ENCODE measurements at regions of chr6 and their contacts with region 1.

Region 1: GRCh38 chr6:53544470-53545308 is at the start of gene GCLC:
- DNase-seq: peak; percentile 97
- H3K4me3 ChIP-seq: peak within 1 kb of the TSS; percentile 44 to 73 (median 63)
- H3K27ac ChIP-seq: peak within 1 kb of the TSS; percentile 53
- H3K4me1 ChIP-seq: peaks cover 24% of the 10 kb centered on the region
- H3K27me3 ChIP-seq: no peaks in the 10 kb centered on the region
- CTCF ChIP-seq: peak; percentile 39 to 65
- POLR2A ChIP-seq: peak; percentile 89
- total RNA-seq, gene GCLC: 17.3 and 22.8 TPM in 2 replicates

Region 2: GRCh38 chr6:53033764-53034163 is 510.9 kb before region 1 on chr6:
- CTCF ChIA-PET with region 1: no interaction called
- POLR2A ChIA-PET with region 1: no interaction called
- dilution Hi-C with region 1: no loop called
- intact Hi-C with region 1: no loop called
- DNase-seq: peak; percentile 61
- H3K4me3 ChIP-seq: no peak overlapping the region
- H3K27ac ChIP-seq: no peak overlapping the region
- H3K4me1 ChIP-seq: peaks cover 17% of the 10 kb centered on the region
- H3K27me3 ChIP-seq: no peaks in the 10 kb centered on the region
- CTCF ChIP-seq: no peak
- POLR2A ChIP-seq: no peak

Region 3: DNA sequence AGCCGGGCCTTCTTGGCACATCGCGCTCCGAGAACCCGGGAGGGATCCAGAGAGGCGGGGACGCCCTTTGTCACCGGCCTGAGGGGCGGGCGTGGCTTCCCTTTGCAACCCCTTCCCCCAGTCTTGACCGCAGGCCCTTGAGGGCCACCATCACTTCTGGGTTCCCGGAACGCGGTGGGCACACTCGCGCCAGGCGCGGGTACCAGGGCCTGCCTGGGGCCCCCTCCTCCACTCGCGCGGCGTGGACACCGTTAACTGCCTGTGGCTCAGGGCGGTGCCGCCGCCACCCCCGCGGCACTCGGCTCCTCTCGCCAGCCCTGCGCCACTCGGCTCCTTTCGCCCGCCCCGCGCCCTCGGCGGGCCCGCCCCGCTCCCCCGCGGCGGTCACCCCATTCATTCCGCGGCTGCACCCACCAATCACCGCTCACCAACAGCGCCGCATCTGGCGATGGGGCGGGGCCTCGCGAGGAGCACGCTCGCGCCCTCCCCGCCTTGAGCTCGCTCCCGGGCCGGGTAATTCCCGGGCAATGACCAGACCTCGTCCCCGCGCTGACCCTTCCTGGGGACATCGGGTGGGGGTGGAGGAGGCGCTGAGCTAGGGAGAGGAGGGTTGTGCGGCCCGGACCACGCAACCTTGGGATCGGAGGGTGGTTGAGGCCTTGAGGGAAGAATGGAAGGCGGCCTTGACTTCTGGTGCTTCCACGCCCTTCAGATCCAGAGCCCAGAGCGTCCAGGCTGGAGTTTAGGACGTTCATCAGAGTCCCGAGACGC is 185.4 kb before region 1 on chr6:
- CTCF ChIA-PET with region 1: no interaction called
- POLR2A ChIA-PET with region 1: no interaction called
- dilution Hi-C with region 1: no loop called
- intact Hi-C with region 1: loop called (anchors 1 kb)
- DNase-seq: peak; percentile 97
- H3K4me3 ChIP-seq: peak overlapping the region in 2 of 3 experiments; percentile 46 to 63
- H3K27ac ChIP-seq: peak overlapping the region; percentile 78
- H3K4me1 ChIP-seq: peaks cover 31% of the 10 kb centered on the region
- H3K27me3 ChIP-seq: peaks cover 0 to 3% of the 10 kb centered on the region in 2 experiments
- CTCF ChIP-seq: no peak
- POLR2A ChIP-seq: peak; percentile 46

Region 4: GRCh38 chr6:53651764-53652401 is 107.2 kb after region 1 on chr6:
- CTCF ChIA-PET with region 1: interaction called, 6 read pairs
- POLR2A ChIA-PET with region 1: no interaction called
- dilution Hi-C with region 1: no loop called
- intact Hi-C with region 1: loop called (anchors 1 kb)
- DNase-seq: peak; percentile 64
- H3K4me3 ChIP-seq: peak overlapping the region in 2 of 3 experiments; percentile 42 to 48
- H3K27ac ChIP-seq: no peak overlapping the region
- H3K4me1 ChIP-seq: peaks cover 5% of the 10 kb centered on the region
- H3K27me3 ChIP-seq: peaks cover 9 to 10% of the 10 kb centered on the region in 2 experiments
- CTCF ChIP-seq: peak in 1 of 2 donors; percentile 48
- POLR2A ChIP-seq: no peak

Region 5: DNA sequence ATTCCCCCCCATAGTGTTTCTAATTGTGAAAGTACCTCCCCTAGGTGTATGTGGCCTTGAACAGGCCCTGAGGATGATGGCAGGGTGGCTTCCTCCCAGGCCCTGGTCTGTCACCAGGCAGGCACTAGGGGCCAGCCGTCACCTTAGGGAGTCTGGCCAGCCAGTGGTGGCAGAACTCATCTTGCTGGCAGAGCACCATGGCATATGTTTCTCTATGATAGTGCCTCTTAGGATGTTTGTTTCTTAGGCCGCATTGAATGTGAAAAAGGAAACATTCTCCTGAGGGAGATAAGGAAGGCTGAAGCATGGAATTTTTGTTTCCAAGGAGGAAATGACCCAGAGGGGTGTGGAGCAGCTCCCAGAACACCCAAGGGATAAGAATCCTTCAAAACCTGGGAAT is 166.1 kb after region 1 on chr6:
- CTCF ChIA-PET with region 1: no interaction called
- POLR2A ChIA-PET with region 1: no interaction called
- dilution Hi-C with region 1: no loop called
- intact Hi-C with region 1: no loop called
- DNase-seq: peak; percentile 78
- H3K4me3 ChIP-seq: no peak overlapping the region
- H3K27ac ChIP-seq: no peak overlapping the region
- H3K4me1 ChIP-seq: no peaks in the 10 kb centered on the region
- H3K27me3 ChIP-seq: peaks cover 0 to 9% of the 10 kb centered on the region in 2 experiments
- CTCF ChIP-seq: no peak
- POLR2A ChIP-seq: no peak

Region 6: GRCh38 chr6:53734473-53735299 is 190.0 kb after region 1 on chr6:
- CTCF ChIA-PET with region 1: no interaction called
- POLR2A ChIA-PET with region 1: no interaction called
- dilution Hi-C with region 1: no loop called
- intact Hi-C with region 1: loop called (anchors 2 kb)
- DNase-seq: peak; percentile 75
- H3K4me3 ChIP-seq: peak overlapping the region in 1 of 3 experiments; percentile 18
- H3K27ac ChIP-seq: peak overlapping the region; percentile 98
- H3K4me1 ChIP-seq: peaks cover 40% of the 10 kb centered on the region
- H3K27me3 ChIP-seq: no peaks in the 10 kb centered on the region
- CTCF ChIP-seq: peak; percentile 25 to 43
- POLR2A ChIP-seq: no peak

Region 7: DNA sequence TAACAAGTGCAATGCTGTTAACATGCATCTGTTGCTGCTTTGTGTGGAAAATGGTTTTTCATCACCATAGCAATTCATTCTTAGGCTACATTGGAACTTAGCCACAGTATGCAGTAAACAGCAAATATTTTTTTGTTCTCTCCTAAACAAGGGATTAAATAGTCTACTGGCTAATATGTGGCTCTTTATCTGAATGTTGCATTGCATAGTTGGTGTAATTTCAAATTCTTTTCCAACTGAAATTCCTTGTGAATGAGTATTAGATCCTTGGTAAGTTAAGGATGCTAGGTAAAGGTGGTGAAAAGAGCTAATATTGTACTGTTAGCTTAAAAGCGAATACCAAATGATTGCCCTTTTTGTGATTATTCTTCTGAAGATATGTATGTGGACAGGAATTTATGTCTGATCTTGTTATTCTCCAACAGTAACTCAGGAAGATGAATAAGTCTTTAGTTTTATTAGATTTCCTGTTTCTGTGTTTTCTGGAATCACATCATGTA is 567.5 kb after region 1 on chr6:
- CTCF ChIA-PET with region 1: no interaction called
- POLR2A ChIA-PET with region 1: no interaction called
- dilution Hi-C with region 1: no loop called
- intact Hi-C with region 1: loop called (anchors 10 kb)
- DNase-seq: peak; percentile 91
- H3K4me3 ChIP-seq: peak overlapping the region in 1 of 3 experiments; percentile 28
- H3K27ac ChIP-seq: peak overlapping the region; percentile 89
- H3K4me1 ChIP-seq: peaks cover 38% of the 10 kb centered on the region
- H3K27me3 ChIP-seq: no peaks in the 10 kb centered on the region
- CTCF ChIP-seq: no peak
- POLR2A ChIP-seq: peak; percentile 56

Region 8: GRCh38 chr6:54431466-54431865 is 886.8 kb after region 1 on chr6:
- CTCF ChIA-PET with region 1: no interaction called
- POLR2A ChIA-PET with region 1: no interaction called
- dilution Hi-C with region 1: no loop called
- intact Hi-C with region 1: loop called (anchors 5 kb)
- DNase-seq: peak; percentile 73
- H3K4me3 ChIP-seq: no peak overlapping the region
- H3K27ac ChIP-seq: no peak overlapping the region
- H3K4me1 ChIP-seq: peaks cover 10% of the 10 kb centered on the region
- H3K27me3 ChIP-seq: peaks cover 25 to 26% of the 10 kb centered on the region in 2 experiments
- CTCF ChIP-seq: no peak
- POLR2A ChIP-seq: no peak